ENCODE measurements at regions of chr16 and their contacts with region 1.

Region 1: DNA sequence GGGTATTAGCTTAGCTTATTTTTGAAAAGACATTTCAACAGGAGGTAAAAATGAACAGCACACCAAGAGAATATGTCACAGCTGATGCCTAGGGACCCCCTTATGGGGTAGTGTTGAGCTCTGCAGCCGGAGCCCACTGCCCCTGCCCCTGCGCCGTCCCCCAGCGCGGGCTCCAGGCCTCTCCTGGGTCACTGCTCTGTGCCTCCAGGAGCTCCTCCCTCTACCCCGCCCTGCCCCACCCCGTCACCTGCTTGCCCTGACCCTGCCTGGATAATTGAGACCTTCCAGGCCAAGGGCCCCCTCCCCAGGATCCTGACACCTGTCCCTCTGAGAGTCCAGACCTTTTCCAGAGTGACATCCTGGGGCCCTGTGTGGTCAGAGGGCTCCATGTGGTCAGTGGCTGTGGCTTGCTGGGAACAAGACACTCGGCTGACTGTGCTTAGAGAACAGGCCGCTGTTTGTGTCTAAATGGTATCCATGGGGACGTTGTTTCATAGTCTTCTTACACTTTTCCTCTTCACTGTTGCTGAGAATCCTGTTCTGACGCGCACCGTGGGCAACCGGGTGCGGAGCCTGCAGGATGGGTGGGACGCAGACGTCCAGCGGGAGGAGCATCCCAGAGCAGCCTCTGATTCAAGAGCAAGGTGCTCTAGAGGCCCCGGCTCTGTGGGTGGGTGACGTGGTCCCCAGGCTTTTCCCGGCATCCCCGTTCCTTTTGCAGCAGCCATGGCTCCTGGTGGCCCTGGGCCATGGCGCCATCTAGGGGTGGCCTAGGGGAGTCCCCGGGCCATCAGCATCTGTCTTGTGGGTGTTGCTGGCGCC is 20.1 kb upstream of the WFIKKN1 start:
- DNase-seq: peak in 1 of 2 donors; percentile 65
- ATAC-seq: peak; percentile 73 to 94
- H3K4me3 ChIP-seq: no peak overlapping the region
- H3K27ac ChIP-seq: peak overlapping the region in 2 of 4 donors; percentile 28 to 41
- H3K4me1 ChIP-seq: peaks cover 11 to 13% of the 10 kb centered on the region in 2 donors
- H3K27me3 ChIP-seq: no peaks in the 10 kb centered on the region
- CTCF ChIP-seq: peak; percentile 67 to 89 (median 80)
- POLR2A ChIP-seq: no peak

Region 2: GRCh38 chr16:325375-326145 is 285.2 kb before region 1 on chr16:
- in situ Hi-C with region 1: no loop called
- intact Hi-C with region 1: no loop called
- DNase-seq: no peak
- ATAC-seq: no peak
- H3K4me3 ChIP-seq: peak overlapping the region in 1 of 4 donors; percentile 25
- H3K27ac ChIP-seq: peak overlapping the region in 1 of 4 donors; percentile 14
- H3K4me1 ChIP-seq: peaks cover 12 to 17% of the 10 kb centered on the region in 2 donors
- H3K27me3 ChIP-seq: no peaks in the 10 kb centered on the region
- CTCF ChIP-seq: no peak
- POLR2A ChIP-seq: no peak

Region 3: DNA sequence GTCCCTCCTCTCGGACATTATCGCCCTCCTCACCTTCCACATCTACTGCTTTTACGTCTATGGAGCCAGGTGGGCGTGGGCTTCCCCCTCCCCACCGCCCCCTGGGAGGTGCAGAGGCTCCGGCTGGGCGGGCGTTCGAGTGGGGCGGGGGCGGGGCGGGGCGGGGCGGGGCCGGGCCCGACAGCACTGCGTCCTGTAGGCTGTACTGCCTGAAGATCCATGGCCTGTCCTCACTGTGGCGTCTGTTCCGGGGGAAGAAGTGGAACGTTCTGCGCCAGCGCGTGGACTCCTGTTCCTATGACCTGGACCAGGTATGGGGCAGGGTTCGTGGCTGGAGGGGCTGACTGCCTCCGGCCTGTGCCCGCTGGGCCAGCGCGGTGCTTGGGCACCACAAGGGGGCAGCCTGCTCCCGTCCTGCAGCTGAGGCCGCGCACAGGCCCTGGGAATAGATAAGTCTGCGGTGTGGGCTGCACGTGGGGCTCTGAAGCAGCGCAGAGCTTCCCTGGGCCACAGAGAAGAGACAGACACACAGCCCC is 31.8 kb before region 1 on chr16:
- in situ Hi-C with region 1: no loop called
- intact Hi-C with region 1: loop called (anchors 2 kb)
- DNase-seq: peak; percentile 38 to 72
- ATAC-seq: peak; percentile 84 to 86
- H3K4me3 ChIP-seq: no peak overlapping the region
- H3K27ac ChIP-seq: no peak overlapping the region
- H3K4me1 ChIP-seq: no peaks in the 10 kb centered on the region
- H3K27me3 ChIP-seq: no peaks in the 10 kb centered on the region
- CTCF ChIP-seq: peak; percentile 82 to 91 (median 86)
- POLR2A ChIP-seq: no peak

Measured in gastrocnemius medialis (tissue), 4 donors.